A549 (cell line): ENCODE measurements at regions of chr17 and their contacts with region 1.

Region 1: GRCh38 chr17:17774009-17774881 is 62.5 kb downstream of the SREBF1 start:
- DNase-seq: peak; percentile 39 to 74
- ATAC-seq: peak; percentile 32 to 72; a peak in 4 of 6 replicates
- H3K4me3 ChIP-seq: no peak overlapping the region
- H3K27ac ChIP-seq: peak overlapping the region; percentile 41 to 61; a peak in 4 of 6 replicates
- H3K4me1 ChIP-seq: peaks cover 31% of the 10 kb centered on the region
- CTCF ChIP-seq: peak; percentile 45
- EP300 ChIP-seq: no peak
- POLR2A ChIP-seq: no peak
- RAD21 ChIP-seq: peak; percentile 53 to 60; a peak in 4 of 5 replicates

Region 2: DNA sequence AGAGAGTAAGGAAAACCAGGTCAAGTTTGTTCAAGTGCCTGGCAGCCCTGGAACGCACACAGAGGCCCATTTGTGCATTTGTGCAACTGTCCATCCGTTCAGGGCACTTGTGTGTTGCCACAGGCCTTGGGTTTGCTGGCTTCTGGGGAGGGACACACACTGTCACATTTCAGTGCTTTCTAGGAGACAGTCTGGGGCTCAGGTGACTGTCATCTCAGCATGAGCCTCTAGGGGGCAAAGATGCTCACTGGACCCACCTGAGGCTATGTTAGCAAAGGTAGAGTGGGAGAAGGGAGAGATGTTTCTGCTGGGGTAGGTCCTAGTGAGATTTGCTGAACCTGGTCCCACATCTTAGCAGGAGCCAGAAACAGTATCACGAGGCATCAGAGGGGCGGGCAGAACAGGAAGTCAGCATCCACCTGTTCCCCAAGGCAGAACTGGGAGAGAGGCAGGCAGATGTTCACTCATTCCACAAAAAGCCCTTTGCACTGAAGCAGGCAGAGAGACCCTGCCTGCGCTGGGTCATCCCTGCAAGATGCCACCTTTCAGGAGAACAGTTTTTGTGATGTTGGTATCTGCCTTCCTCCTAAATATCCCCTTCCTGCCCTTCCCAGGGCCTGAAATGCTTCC is 44.5 kb before region 1 on chr17:
- CTCF ChIA-PET with region 1: interaction called, 19 read pairs
- POLR2A ChIA-PET with region 1: no interaction called
- DNase-seq: peak; percentile 48 to 79
- ATAC-seq: peak; percentile 63 to 78
- H3K4me3 ChIP-seq: no peak overlapping the region
- H3K27ac ChIP-seq: peak overlapping the region; percentile 30 to 79; a peak in 4 of 6 replicates
- H3K4me1 ChIP-seq: peaks cover 82% of the 10 kb centered on the region
- CTCF ChIP-seq: peak; percentile 56
- EP300 ChIP-seq: no peak
- POLR2A ChIP-seq: no peak
- RAD21 ChIP-seq: peak; percentile 55 to 67

Region 3: DNA sequence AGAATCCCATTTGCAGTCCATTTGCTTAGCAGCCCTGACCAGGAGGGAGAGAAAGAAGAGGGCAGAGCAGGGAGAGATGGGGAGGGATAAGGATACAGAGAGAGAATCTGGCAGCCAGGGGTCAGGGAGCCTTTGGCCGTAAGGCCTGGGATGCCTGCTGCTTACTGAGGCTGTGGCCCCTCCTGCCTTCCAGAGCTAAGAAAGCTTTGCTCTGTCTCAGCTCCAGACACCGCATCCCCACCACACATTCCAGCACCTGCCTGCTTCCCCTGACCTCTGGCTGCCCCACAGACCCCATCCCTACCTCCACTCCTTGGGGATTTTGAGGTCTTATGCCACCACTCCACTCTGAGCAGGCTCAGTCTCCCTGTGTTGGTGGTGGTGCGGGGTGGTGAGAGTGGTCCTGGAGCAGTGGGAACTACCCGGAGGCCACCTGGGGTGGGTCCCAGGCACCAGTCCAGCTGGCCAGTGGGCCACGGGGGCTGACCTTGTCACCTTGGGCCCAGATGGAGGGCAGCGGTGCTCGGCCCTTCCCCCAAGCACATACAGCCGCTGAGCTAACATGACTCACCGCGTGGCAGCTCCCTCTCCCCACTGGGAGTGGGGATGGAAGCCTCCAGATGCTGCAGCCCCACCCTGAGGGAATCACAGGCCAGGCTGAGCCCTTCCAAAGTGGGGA is 34.7 kb before region 1 on chr17:
- CTCF ChIA-PET with region 1: interaction called, 10 read pairs
- POLR2A ChIA-PET with region 1: no interaction called
- DNase-seq: peak; percentile 52 to 88
- ATAC-seq: peak; percentile 54 to 66
- H3K4me3 ChIP-seq: 0 out of 3 replicates have a peak overlapping the region, but pooled peaks have one; percentile 4
- H3K27ac ChIP-seq: peak overlapping the region; percentile 87 to 97
- H3K4me1 ChIP-seq: peaks cover 74% of the 10 kb centered on the region
- CTCF ChIP-seq: no peak
- EP300 ChIP-seq: no peak
- POLR2A ChIP-seq: no peak
- RAD21 ChIP-seq: peak; percentile 18 to 27; a peak in 2 of 5 replicates

Region 4: DNA sequence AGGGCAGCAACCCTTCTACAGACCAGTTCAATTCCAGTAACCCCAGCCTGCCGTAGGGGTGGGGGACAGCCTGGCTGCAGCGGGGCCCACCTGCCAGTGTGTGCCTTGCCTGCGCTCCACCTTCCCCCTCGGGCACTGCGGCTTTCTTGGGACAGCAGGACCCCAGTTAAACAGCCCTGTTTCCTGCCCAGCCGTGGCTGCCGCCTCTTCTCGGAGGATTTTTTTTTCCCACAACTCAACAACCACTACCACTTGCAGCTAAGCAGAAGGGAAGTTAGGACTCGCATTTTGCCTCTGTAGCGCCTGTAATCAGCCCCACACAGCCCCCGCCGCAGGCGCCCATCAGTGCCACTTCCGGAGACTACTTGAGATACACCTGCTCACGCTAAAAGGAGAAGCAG is 16.9 kb before region 1 on chr17:
- CTCF ChIA-PET with region 1: interaction called, 20 read pairs
- POLR2A ChIA-PET with region 1: no interaction called
- DNase-seq: no peak
- ATAC-seq: no peak
- H3K4me3 ChIP-seq: no peak overlapping the region
- H3K27ac ChIP-seq: no peak overlapping the region
- H3K4me1 ChIP-seq: peaks cover 14% of the 10 kb centered on the region
- CTCF ChIP-seq: no peak
- EP300 ChIP-seq: no peak
- POLR2A ChIP-seq: no peak
- RAD21 ChIP-seq: no peak

Region 5: GRCh38 chr17:17763136-17763535 is 11.1 kb before region 1 on chr17:
- CTCF ChIA-PET with region 1: interaction called, 20 read pairs
- POLR2A ChIA-PET with region 1: no interaction called
- DNase-seq: no peak
- ATAC-seq: no peak
- H3K4me3 ChIP-seq: no peak overlapping the region
- H3K27ac ChIP-seq: no peak overlapping the region
- H3K4me1 ChIP-seq: peaks cover 14% of the 10 kb centered on the region; the same call in 2 of the 3 replicates
- CTCF ChIP-seq: no peak
- EP300 ChIP-seq: no peak
- POLR2A ChIP-seq: no peak
- RAD21 ChIP-seq: no peak